H1 (cell line): ENCODE measurements at regions of chr17 and their contacts with region 1.

Region 1: GRCh38 chr17:38358586-38359513 is 7.2 kb downstream of the SOCS7 start:
- DNase-seq: no peak
- H3K4me3 ChIP-seq: no peak overlapping the region
- H3K27ac ChIP-seq: no peak overlapping the region
- H3K4me1 ChIP-seq: peaks cover 0 to 4% (median 2%) of the 10 kb centered on the region in 4 experiments; a peak in 2 of 7 replicates
- H3K27me3 ChIP-seq: no peaks in the 10 kb centered on the region
- CTCF ChIP-seq: no peak
- EP300 ChIP-seq: no peak
- POLR2A ChIP-seq: no peak
- RAD21 ChIP-seq: no peak

Region 2: DNA sequence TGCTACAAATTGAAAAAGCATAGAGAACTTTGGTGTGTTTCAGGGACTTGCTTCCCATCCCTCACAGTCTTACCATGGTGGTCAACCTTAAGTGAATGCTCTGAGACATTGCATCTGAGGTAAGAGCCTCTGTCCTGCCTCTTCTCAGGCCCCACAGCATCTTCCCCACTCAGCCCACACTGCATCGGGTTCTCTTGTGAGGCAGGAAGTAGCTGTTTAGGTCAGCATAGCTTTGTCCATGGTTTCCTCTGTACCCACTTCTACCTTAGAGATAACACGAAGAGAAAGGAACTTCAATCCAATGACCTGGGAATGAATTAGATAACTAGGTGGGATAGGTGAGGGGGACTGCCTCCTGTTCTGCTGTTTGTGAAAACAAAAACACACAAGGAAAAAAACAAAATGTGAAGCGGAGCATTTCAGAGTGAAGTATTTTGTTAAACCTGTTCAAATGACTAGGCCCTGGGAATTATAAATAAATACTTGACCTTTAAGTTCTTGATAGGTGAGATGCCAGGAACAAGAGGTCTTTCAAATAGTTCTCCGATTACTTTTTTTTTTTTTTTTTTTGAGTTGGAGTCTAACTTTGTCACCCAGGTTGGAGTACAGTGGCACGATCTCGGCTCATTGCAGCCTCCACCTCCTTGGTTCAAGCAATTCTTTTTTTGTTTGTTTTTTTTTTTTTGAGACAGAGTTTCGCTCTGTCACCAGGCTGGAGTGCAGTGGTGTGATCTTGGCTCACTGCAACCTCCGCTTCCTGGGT is 10.5 kb after region 1 on chr17:
- CTCF ChIA-PET with region 1: interaction called, 28 read pairs
- POLR2A ChIA-PET with region 1: interaction called, 4 read pairs
- DNase-seq: no peak
- H3K4me3 ChIP-seq: no peak overlapping the region
- H3K27ac ChIP-seq: no peak overlapping the region
- H3K4me1 ChIP-seq: no peaks in the 10 kb centered on the region
- H3K27me3 ChIP-seq: no peaks in the 10 kb centered on the region
- CTCF ChIP-seq: no peak
- EP300 ChIP-seq: no peak
- POLR2A ChIP-seq: no peak
- RAD21 ChIP-seq: no peak